MCF 10A (cell line): ENCODE measurements at regions of chr12 and their contacts with region 1.

Region 1: GRCh38 chr12:62259993-62260732 is at the start of gene USP15:
- DNase-seq: peak; percentile 95
- H3K4me3 Mint-ChIP-seq: peak within 1 kb of the TSS; percentile 78
- H3K27ac Mint-ChIP-seq: peak within 1 kb of the TSS; percentile 97
- H3K4me1 Mint-ChIP-seq: peaks cover 34% of the 10 kb centered on the region
- H3K27me3 Mint-ChIP-seq: no peaks in the 10 kb centered on the region
- CTCF ChIP-seq: peak; percentile 57
- total RNA-seq, gene USP15: 63.6 and 71.0 TPM in 2 replicates

Region 2: GRCh38 chr12:62210422-62210821 is 49.7 kb before region 1 on chr12:
- CTCF ChIA-PET with region 1: interaction called, 3 read pairs
- POLR2A ChIA-PET with region 1: interaction called, 16 read pairs
- intact Hi-C with region 1: no loop called
- DNase-seq: peak; percentile 62
- H3K4me3 Mint-ChIP-seq: peak overlapping the region; percentile 61
- H3K27ac Mint-ChIP-seq: peak overlapping the region; percentile 69
- H3K4me1 Mint-ChIP-seq: peaks cover 11% of the 10 kb centered on the region
- H3K27me3 Mint-ChIP-seq: no peaks in the 10 kb centered on the region
- CTCF ChIP-seq: peak; percentile 76

Region 3: GRCh38 chr12:62291864-62292760 is 31.9 kb after region 1 on chr12:
- CTCF ChIA-PET with region 1: no interaction called
- POLR2A ChIA-PET with region 1: no interaction called
- intact Hi-C with region 1: no loop called
- DNase-seq: peak; percentile 64
- H3K4me3 Mint-ChIP-seq: no peak overlapping the region
- H3K27ac Mint-ChIP-seq: no peak overlapping the region
- H3K4me1 Mint-ChIP-seq: peaks cover 13% of the 10 kb centered on the region
- H3K27me3 Mint-ChIP-seq: no peaks in the 10 kb centered on the region
- CTCF ChIP-seq: no peak

Region 4: GRCh38 chr12:62396750-62397149 is 136.6 kb after region 1 on chr12:
- CTCF ChIA-PET with region 1: no interaction called
- POLR2A ChIA-PET with region 1: no interaction called
- intact Hi-C with region 1: loop called (anchors 10 kb)
- DNase-seq: no peak
- H3K4me3 Mint-ChIP-seq: no peak overlapping the region
- H3K27ac Mint-ChIP-seq: no peak overlapping the region
- H3K4me1 Mint-ChIP-seq: no peaks in the 10 kb centered on the region
- H3K27me3 Mint-ChIP-seq: no peaks in the 10 kb centered on the region
- CTCF ChIP-seq: no peak